PC-9 (cell line): ENCODE measurements at regions of chr12 and their contacts with region 1.

Region 1: DNA sequence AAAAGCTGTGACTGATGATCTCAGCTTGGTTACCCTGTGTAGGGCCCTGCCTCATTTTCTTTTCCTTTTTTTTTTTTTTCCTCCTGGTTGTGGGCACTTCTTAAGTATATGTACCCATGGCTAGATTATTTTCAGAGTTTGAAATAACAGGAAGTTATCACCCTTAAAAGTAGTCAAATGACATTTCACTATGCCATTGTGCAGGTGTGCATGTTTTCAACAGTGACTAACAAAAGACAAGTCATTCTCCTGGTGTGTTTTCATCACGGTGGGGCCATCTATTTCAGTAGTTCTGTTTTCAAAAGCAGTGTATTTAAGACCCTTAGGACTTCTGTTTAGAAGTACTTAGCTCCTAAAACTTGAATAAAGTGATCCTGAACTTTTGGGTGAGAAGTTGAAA is 15.0 kb downstream of the GABARAPL1 start:
- DNase-seq: no peak
- H3K4me3 ChIP-seq: no peak overlapping the region
- H3K27ac ChIP-seq: no peak overlapping the region
- H3K4me1 ChIP-seq: no peaks in the 10 kb centered on the region
- H3K27me3 ChIP-seq: no peaks in the 10 kb centered on the region
- CTCF ChIP-seq: no peak

Region 2: GRCh38 chr12:8985213-8985754 is 1242.4 kb before region 1 on chr12:
- CTCF ChIA-PET with region 1: interaction called, 12 read pairs
- POLR2A ChIA-PET with region 1: no interaction called
- intact Hi-C with region 1: no loop called
- DNase-seq: no peak
- H3K4me3 ChIP-seq: no peak overlapping the region
- H3K27ac ChIP-seq: no peak overlapping the region
- H3K4me1 ChIP-seq: no peaks in the 10 kb centered on the region
- H3K27me3 ChIP-seq: no peaks in the 10 kb centered on the region
- CTCF ChIP-seq: no peak

Region 3: GRCh38 chr12:10113080-10113479 is 114.6 kb before region 1 on chr12:
- CTCF ChIA-PET with region 1: no interaction called
- POLR2A ChIA-PET with region 1: no interaction called
- intact Hi-C with region 1: no loop called
- DNase-seq: no peak
- H3K4me3 ChIP-seq: no peak overlapping the region
- H3K27ac ChIP-seq: peak overlapping the region; percentile 12; the same call in 1 of the 2 replicates
- H3K4me1 ChIP-seq: peaks cover 11% of the 10 kb centered on the region
- H3K27me3 ChIP-seq: no peaks in the 10 kb centered on the region
- CTCF ChIP-seq: no peak